OCI-LY7 (cell line): ENCODE measurements at regions of chr4 and their contacts with region 1.

Region 1: DNA sequence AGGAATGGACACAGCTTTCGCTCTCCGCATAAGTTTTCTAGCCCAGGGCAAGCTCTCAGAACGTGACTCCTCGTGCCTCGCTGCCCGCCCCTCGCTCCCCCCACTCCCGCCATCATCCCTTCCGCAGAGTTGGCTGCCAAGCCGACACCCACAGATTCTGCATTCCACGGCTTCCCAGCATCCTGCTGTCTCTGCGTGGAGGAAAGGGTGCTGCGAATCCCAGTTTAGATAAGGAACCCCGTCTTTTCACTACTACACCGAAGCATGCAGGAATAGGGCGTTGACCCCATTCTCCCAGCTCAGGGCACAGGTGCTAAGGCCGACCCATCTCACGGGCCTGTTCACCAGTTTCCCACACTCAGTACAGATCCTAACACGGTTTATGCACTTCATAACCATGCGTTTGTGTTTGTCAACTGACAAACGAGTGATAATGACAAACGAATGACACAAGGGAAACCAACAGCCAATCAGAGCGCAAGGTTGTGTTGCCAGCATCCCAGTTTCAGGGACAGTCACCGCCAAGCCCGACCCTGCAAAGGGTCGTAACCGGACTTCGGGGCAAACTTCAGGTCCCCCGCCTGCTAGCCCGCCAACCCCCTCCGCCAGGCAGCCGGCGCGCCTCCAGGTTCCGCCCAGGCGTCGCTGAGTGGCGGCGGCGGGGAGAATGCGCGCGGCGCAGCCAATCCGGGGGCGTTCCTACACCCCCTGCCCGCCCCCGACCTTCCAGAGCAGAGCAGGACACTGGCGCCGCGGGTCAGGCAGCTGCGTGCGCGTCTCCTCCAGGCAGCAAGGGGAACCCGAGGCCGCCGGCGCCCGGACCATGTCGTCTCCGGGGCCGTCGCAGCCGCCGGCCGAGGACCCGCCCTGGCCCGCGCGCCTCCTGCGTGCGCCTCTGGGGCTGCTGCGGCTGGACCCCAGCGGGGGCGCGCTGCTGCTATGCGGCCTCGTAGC is at the start of gene CYP2U1:
- DNase-seq: peak; percentile 76
- H3K4me3 ChIP-seq: peak within 1 kb of the TSS; percentile 75
- H3K27ac ChIP-seq: peak within 1 kb of the TSS; percentile 41
- H3K4me1 ChIP-seq: peaks cover 36% of the 10 kb centered on the region
- CTCF ChIP-seq: 0 out of 2 replicates have a peak, but pooled peaks have one; percentile 18
- total RNA-seq, gene CYP2U1: 5.6 and 7.4 TPM in 2 replicates

Region 2: DNA sequence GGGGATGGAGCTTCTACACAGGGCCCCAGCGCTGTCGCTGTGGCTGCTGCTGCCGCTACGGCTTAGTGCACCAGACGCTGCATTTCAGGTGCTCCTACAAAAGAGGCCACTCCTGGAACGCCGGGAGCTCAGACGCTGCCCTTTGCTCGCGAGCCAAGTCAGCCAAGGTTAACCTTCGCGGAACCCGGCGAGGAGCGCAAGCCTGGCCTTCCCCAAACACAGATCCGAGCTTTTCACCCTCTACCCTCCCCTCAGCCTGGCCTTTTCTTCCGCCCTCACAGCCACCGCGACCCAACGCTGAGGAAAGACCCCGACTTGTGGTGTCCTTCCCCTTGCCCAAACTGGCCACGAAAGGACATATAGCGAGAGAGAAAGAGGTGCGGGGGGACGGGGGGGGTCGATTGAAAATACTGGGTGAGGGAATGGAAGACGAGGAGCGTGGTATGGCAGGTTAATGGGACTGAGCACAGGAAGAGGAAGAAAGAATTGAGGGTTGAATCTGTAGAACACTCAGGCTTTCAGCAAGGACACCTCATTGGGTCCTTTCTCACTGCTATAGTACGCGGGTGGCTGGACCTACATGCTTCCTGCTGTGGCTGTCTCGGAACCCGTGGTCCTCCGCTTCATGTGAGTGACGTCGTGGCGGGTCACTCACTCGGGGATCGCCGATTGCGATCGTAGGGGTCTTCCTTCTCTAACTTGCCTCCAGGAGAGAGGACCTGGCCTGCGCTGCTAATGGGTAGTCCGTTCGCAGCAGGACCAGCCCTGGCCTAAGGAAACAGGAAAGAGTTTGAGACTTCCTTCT is 1614.9 kb before region 1 on chr4 and contains the starts of genes AIMP1 and TBCK:
- CTCF ChIA-PET with region 1: no interaction called
- POLR2A ChIA-PET with region 1: no interaction called
- intact Hi-C with region 1: loop called (anchors 10 kb)
- DNase-seq: peak; percentile 92
- H3K4me3 ChIP-seq: peak within 1 kb of the TSS; percentile 92
- H3K27ac ChIP-seq: peak within 1 kb of the TSS; percentile 75
- H3K4me1 ChIP-seq: peaks cover 24% of the 10 kb centered on the region
- CTCF ChIP-seq: no peak
- total RNA-seq, gene AIMP1: 17.4 and 26.7 TPM in 2 replicates
- total RNA-seq, gene TBCK: 30.2 and 46.5 TPM in 2 replicates

Region 3: DNA sequence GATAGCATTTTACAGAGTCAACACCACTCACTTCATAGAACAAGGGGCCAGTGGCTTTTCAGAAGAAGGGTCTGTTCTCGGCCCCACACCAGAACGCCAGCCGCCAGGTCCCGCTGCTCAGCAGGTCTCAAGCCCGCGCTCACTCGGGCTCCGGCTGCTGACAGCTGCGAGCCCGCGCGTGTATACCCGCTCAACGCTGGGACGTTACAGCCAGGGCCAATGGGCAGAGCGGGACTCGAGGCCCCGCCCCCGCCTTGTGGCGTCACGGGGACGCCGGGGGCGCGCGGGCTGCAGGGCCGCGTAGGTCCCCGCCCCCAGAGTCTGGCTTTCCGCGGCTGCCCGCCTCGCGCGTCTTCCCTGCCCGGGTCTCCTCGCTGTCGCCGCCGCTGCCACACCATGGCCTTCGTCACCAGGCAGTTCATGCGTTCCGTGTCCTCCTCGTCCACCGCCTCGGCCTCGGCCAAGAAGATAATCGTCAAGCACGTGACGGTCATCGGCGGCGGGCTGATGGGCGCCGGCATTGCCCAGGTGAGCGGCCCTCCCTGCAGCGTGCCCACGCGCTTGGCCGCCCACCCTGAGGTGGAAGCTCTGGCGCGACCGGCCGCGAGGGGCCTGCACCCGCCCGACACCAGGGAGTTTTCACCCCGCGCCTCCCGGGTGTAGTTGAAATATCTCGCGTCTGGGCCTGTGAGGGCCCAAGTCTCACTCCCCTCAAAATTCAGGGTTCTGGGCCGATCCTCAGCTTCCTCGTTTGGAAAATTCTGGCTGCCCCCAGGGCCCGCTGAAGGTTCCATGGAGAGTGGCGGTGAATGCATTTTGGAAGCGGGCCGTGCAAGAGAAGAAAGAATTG is 58.7 kb after region 1 on chr4 and contains the start of gene HADH:
- CTCF ChIA-PET with region 1: no interaction called
- POLR2A ChIA-PET with region 1: interaction called, 8 read pairs
- intact Hi-C with region 1: loop called (anchors 1 kb)
- DNase-seq: peak; percentile 96
- H3K4me3 ChIP-seq: peak within 1 kb of the TSS; percentile 99
- H3K27ac ChIP-seq: peak within 1 kb of the TSS; percentile 63
- H3K4me1 ChIP-seq: peaks cover 46% of the 10 kb centered on the region
- CTCF ChIP-seq: no peak
- total RNA-seq, gene HADH: 31.2 and 32.3 TPM in 2 replicates

Region 4: GRCh38 chr4:108172753-108173598 is 241.9 kb after region 1 on chr4:
- CTCF ChIA-PET with region 1: no interaction called
- POLR2A ChIA-PET with region 1: interaction called, 3 read pairs
- intact Hi-C with region 1: loop called (anchors 5 kb)
- DNase-seq: peak; percentile 64
- H3K4me3 ChIP-seq: peak overlapping the region; percentile 67
- H3K27ac ChIP-seq: no peak overlapping the region
- H3K4me1 ChIP-seq: peaks cover 49% of the 10 kb centered on the region
- CTCF ChIP-seq: no peak; the same call in 1 of the 2 replicates